HepG2 (cell line): ENCODE measurements at regions of chr3 and their contacts with region 1.

Region 1: DNA sequence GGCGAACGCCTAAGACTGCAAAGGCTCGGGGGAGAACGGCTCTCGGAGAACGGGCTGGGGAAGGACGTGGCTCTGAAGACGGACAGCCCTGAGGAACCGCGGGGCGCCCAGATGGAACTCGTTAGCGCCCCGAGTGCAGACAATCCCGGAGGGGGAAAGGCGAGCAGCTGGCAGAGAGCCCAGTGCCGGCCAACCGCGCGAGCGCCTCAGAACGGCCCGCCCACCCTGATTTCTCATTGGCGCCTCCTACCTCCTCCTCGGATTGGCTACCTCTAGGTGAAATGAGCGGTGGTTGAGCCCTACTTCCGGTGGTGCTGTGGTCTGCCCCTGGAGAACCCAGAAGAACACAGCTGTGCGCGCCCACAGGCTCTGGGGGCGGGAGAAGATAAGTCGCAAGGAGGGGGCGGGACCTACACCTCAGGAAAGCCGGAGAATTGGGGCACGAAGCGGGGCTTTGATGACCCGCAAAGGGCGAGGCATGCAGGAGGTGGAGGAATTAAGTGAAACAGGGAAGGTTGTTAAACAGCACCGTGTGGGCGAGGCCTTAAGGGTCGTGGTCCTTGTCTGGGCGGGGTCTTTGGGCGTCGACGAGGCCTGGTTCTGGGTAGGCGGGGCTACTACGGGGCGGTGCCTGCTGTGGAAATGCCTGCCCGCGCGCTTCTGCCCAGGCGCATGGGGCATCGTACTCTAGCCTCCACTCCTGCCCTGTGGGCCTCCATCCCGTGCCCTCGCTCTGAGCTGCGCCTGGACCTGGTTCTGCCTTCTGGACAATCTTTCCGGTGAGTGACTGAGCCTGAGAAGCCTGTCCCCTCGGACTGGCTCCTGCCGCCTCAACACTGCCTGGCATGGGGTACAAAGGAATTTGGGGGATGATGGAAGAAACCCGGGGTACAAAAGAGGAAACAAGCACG is at the start of gene OGG1:
- DNase-seq: peak; percentile 96
- ATAC-seq: peak; percentile 95
- H3K4me3 ChIP-seq: peak within 1 kb of the TSS; percentile 83 to 93 (median 89)
- H3K27ac ChIP-seq: peak within 1 kb of the TSS; percentile 72
- H3K4me1 ChIP-seq: peaks cover 19% of the 10 kb centered on the region
- H3K27me3 ChIP-seq: no peaks in the 10 kb centered on the region
- CTCF ChIP-seq: peak; percentile 33
- EP300 ChIP-seq: peak in 1 of 2 experiments; percentile 6; a peak in 2 of 4 replicates
- POLR2A ChIP-seq: peak; percentile 62 to 73
- RAD21 ChIP-seq: no peak
- total RNA-seq, gene OGG1: 23.8 and 28.7 TPM in 2 replicates

Region 2: GRCh38 chr3:9731206-9732079 is 18.5 kb before region 1 on chr3 and contains the start of gene BRPF1:
- CTCF ChIA-PET with region 1: no interaction called
- POLR2A ChIA-PET with region 1: interaction called, 40 read pairs
- in situ Hi-C with region 1: no loop called
- intact Hi-C with region 1: loop called (anchors 1 kb)
- DNase-seq: peak; percentile 95
- ATAC-seq: peak; percentile 95
- H3K4me3 ChIP-seq: peak within 1 kb of the TSS; percentile 89 to 99 (median 96)
- H3K27ac ChIP-seq: peak within 1 kb of the TSS; percentile 99
- H3K4me1 ChIP-seq: peaks cover 31% of the 10 kb centered on the region
- H3K27me3 ChIP-seq: no peaks in the 10 kb centered on the region; a peak in 1 of 5 replicates
- CTCF ChIP-seq: peak; percentile 43
- EP300 ChIP-seq: peak in 1 of 2 experiments; percentile 42; a peak in 1 of 4 replicates
- POLR2A ChIP-seq: peak; percentile 55 to 71
- RAD21 ChIP-seq: 0 out of 2 replicates have a peak, but pooled peaks have one; percentile 35
- total RNA-seq, gene BRPF1: 7.5 and 10.0 TPM in 2 replicates

Region 3: DNA sequence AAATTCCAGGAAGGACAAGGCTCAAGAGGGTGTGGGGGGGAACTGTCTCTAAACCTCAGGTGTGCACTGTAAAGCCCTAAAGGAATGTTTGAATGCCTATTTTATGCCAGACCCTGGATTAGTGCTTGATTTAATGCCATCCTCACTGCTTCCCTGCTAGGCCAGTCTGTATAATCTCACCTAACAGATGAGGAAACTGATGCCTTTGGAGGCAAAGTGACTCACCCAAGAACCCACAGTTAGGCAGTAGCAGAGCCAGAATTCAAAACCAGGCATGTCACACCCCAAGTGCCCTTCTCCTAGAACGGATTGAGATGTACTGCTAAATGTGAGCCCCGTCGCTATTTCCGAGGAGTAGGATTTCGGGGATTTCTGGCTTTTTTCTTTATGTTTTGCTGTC is 12.0 kb after region 1 on chr3:
- CTCF ChIA-PET with region 1: no interaction called
- POLR2A ChIA-PET with region 1: interaction called, 50 read pairs
- in situ Hi-C with region 1: no loop called
- intact Hi-C with region 1: no loop called
- DNase-seq: no peak
- ATAC-seq: no peak
- H3K4me3 ChIP-seq: no peak overlapping the region
- H3K27ac ChIP-seq: no peak overlapping the region
- H3K4me1 ChIP-seq: no peaks in the 10 kb centered on the region
- H3K27me3 ChIP-seq: no peaks in the 10 kb centered on the region
- CTCF ChIP-seq: no peak
- EP300 ChIP-seq: no peak
- POLR2A ChIP-seq: peak in 1 of 2 experiments; percentile 32; a peak in 1 of 4 replicates
- RAD21 ChIP-seq: no peak

Region 4: GRCh38 chr3:9769426-9770275 is 19.8 kb after region 1 on chr3 and contains the start of gene CAMK1:
- CTCF ChIA-PET with region 1: no interaction called
- POLR2A ChIA-PET with region 1: interaction called, 50 read pairs
- in situ Hi-C with region 1: no loop called
- intact Hi-C with region 1: no loop called
- DNase-seq: peak; percentile 45
- ATAC-seq: peak; percentile 91
- H3K4me3 ChIP-seq: peak within 1 kb of the TSS; percentile 68 to 92 (median 76)
- H3K27ac ChIP-seq: peak within 1 kb of the TSS; percentile 57
- H3K4me1 ChIP-seq: peaks cover 39% of the 10 kb centered on the region
- H3K27me3 ChIP-seq: no peaks in the 10 kb centered on the region; a peak in 1 of 5 replicates
- CTCF ChIP-seq: no peak; the same call in 1 of the 2 replicates
- EP300 ChIP-seq: no peak
- POLR2A ChIP-seq: peak in 1 of 2 experiments; percentile 79; a peak in 2 of 4 replicates
- RAD21 ChIP-seq: 0 out of 2 replicates have a peak, but pooled peaks have one; percentile 12
- total RNA-seq, gene CAMK1: 51.8 and 53.3 TPM in 2 replicates

Region 5: DNA sequence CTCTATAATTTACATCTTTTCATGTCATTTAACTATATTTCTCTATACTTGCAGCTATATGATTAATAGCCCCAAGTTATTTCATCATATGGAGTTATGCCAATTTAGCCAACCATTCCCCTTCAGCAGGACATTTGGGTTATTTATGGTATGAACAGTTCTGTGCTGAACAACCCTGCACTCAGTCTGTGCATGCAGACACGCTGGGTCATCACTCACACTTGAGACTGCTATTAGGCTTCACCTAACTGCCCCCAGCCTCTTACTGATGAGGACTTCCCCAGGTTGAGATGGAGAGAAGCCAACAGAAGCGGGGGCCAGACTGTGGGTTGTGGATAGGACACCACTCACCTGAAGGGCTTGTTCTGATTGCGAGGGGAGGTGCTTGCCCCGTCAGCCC is 35.1 kb after region 1 on chr3:
- CTCF ChIA-PET with region 1: no interaction called
- POLR2A ChIA-PET with region 1: no interaction called
- in situ Hi-C with region 1: no loop called
- intact Hi-C with region 1: no loop called
- DNase-seq: no peak
- ATAC-seq: no peak
- H3K4me3 ChIP-seq: no peak overlapping the region
- H3K27ac ChIP-seq: no peak overlapping the region
- H3K4me1 ChIP-seq: peaks cover 16% of the 10 kb centered on the region
- H3K27me3 ChIP-seq: no peaks in the 10 kb centered on the region
- CTCF ChIP-seq: no peak
- EP300 ChIP-seq: no peak
- POLR2A ChIP-seq: no peak
- RAD21 ChIP-seq: no peak